MCF 10A (cell line): ENCODE measurements at regions of chr7 and their contacts with region 1.

Region 1: GRCh38 chr7:10560497-10560896 is 413.2 kb upstream of the PHF14 start:
- DNase-seq: no peak
- H3K4me3 Mint-ChIP-seq: no peak overlapping the region
- H3K27ac Mint-ChIP-seq: no peak overlapping the region
- H3K4me1 Mint-ChIP-seq: no peaks in the 10 kb centered on the region
- H3K27me3 Mint-ChIP-seq: no peaks in the 10 kb centered on the region
- CTCF ChIP-seq: no peak

Region 2: DNA sequence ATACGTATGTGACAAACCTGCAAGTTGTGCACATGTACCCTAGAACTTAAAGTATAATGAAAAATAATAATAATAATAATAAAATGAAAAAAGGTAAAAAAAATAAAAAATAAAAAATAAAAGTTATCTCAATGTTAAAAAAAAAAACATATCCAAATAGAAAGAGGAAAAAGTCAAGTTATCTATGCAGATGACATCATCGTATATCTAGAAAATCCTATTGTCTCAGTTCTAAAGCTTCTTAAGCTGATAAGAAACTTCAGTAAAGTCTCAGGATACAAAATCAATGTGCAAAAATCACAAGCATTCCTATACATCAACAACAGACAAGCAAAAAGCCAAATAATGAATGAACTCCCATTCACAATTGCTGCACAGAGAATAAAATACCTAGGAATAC is 53.5 kb before region 1 on chr7:
- CTCF ChIA-PET with region 1: no interaction called
- POLR2A ChIA-PET with region 1: no interaction called
- intact Hi-C with region 1: no loop called
- DNase-seq: no peak
- H3K4me3 Mint-ChIP-seq: no peak overlapping the region
- H3K27ac Mint-ChIP-seq: no peak overlapping the region
- H3K4me1 Mint-ChIP-seq: no peaks in the 10 kb centered on the region
- H3K27me3 Mint-ChIP-seq: no peaks in the 10 kb centered on the region
- CTCF ChIP-seq: no peak

Region 3: GRCh38 chr7:10579561-10579960 is 19.1 kb after region 1 on chr7:
- CTCF ChIA-PET with region 1: interaction called, 10 read pairs
- POLR2A ChIA-PET with region 1: no interaction called
- intact Hi-C with region 1: no loop called
- DNase-seq: no peak
- H3K4me3 Mint-ChIP-seq: no peak overlapping the region
- H3K27ac Mint-ChIP-seq: no peak overlapping the region
- H3K4me1 Mint-ChIP-seq: no peaks in the 10 kb centered on the region
- H3K27me3 Mint-ChIP-seq: no peaks in the 10 kb centered on the region
- CTCF ChIP-seq: no peak

Region 4: GRCh38 chr7:10618933-10619332 is 58.4 kb after region 1 on chr7:
- CTCF ChIA-PET with region 1: no interaction called
- POLR2A ChIA-PET with region 1: no interaction called
- intact Hi-C with region 1: no loop called
- DNase-seq: no peak
- H3K4me3 Mint-ChIP-seq: no peak overlapping the region
- H3K27ac Mint-ChIP-seq: no peak overlapping the region
- H3K4me1 Mint-ChIP-seq: no peaks in the 10 kb centered on the region
- H3K27me3 Mint-ChIP-seq: no peaks in the 10 kb centered on the region
- CTCF ChIP-seq: no peak